Right cardiac atrium (tissue), 5 donors: ENCODE measurements at regions of chr4 and their contacts with region 1.

Region 1: DNA sequence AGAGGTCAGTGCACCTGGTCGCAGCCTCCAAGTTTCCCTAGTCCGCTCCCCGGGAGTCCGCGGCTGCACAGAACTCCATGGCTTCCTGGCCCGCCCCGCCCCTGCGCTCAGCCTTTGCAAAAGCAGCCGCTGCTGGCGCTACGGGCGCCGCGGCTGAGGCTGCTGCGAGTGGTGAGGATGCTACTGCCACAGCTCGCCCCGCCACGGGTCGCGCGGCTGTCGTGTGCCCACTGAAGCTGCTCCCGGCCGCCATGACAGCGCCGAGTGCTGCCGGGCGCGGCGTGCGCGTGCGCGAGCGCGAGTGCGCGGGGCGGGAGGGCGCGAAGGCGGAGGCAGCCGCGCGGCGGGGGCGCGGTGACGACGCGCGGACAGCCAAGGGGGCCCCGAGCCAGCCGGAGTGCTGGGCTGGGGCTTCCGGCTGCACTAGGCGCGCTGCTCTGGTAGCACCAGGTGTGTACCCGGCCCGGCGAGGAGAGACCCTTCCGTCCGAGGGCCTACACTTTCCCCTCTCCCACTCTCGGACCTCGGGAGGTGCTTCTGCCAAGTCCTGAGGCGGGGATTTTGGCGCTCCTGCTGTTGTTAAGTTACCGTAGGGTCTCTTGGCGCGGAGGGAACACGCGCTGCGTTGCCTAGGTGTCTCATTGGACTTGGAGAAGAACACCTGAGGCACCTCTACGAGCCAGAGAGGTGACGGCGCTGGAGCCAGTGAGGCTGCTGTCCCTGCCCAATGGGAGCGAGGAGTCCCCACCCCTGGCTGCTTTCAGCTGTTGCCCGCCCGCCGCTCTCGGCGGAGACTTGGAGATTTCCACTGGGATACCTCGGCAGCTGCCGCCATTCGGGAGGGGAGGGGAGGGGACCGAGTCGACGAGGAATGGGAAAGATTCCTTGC is 619 bp upstream of the LRBA start:
- DNase-seq: peak; percentile 74 to 91 (median 90)
- ATAC-seq: peak; percentile 95 to 96
- H3K4me3 ChIP-seq: peak overlapping the region; percentile 78
- H3K27ac ChIP-seq: peak overlapping the region; percentile 72
- H3K4me1 ChIP-seq: peaks cover 2% of the 10 kb centered on the region
- H3K27me3 ChIP-seq: no peaks in the 10 kb centered on the region

Region 2: GRCh38 chr4:151099229-151099975 is 83.7 kb after region 1 on chr4 and contains the start of gene RPS3A:
- intact Hi-C with region 1: loop called in 1 of 4 experiments (anchors 5 kb)
- DNase-seq: peak; percentile 95 to 99 (median 98)
- ATAC-seq: peak; percentile 94 to 98
- H3K4me3 ChIP-seq: peak within 1 kb of the TSS; percentile 78
- H3K27ac ChIP-seq: peak within 1 kb of the TSS; percentile 46
- H3K4me1 ChIP-seq: no peaks in the 10 kb centered on the region
- H3K27me3 ChIP-seq: no peaks in the 10 kb centered on the region
- total RNA-seq, gene RPS3A: 1,119 to 1,323 (median 1,233) TPM